ENCODE measurements at regions of chr11 and their contacts with region 1.

Region 1: DNA sequence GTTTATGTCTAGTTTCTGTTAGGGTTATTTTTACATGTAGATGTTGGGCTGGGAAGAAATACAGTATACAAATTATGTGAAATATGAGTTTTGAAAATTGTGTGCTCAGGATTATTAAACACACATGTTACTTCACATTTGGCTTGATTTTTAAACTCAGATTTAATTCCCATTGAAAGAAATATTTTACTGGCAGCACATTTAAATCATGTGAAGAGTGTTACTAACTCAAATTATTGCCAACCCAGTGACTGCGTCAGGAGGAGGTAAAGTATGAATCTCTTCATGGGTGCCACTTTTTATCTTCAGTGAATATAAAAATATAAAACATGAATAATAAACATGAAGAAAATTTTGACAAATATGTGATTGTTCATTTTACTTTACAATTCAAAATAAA is 457.5 kb upstream of the CCDC179 start:
- DNase-seq: no peak
- ATAC-seq: no peak
- H3K4me3 ChIP-seq: no peak overlapping the region
- H3K27ac ChIP-seq: no peak overlapping the region; the same call in 1 of the 2 replicates
- H3K4me1 ChIP-seq: peaks cover 33% of the 10 kb centered on the region
- H3K27me3 ChIP-seq: no peaks in the 10 kb centered on the region
- CTCF ChIP-seq: no peak

Region 2: GRCh38 chr11:22890227-22890626 is 427.6 kb before region 1 on chr11:
- CTCF ChIA-PET with region 1: no interaction called
- POLR2A ChIA-PET with region 1: no interaction called
- intact Hi-C with region 1: no loop called
- DNase-seq: no peak
- ATAC-seq: no peak
- H3K4me3 ChIP-seq: no peak overlapping the region
- H3K27ac ChIP-seq: no peak overlapping the region
- H3K4me1 ChIP-seq: no peaks in the 10 kb centered on the region
- H3K27me3 ChIP-seq: no peaks in the 10 kb centered on the region
- CTCF ChIP-seq: no peak

Region 3: GRCh38 chr11:22984045-22984444 is 333.8 kb before region 1 on chr11:
- CTCF ChIA-PET with region 1: no interaction called
- POLR2A ChIA-PET with region 1: no interaction called
- intact Hi-C with region 1: no loop called
- DNase-seq: no peak
- ATAC-seq: no peak
- H3K4me3 ChIP-seq: no peak overlapping the region
- H3K27ac ChIP-seq: no peak overlapping the region
- H3K4me1 ChIP-seq: no peaks in the 10 kb centered on the region
- H3K27me3 ChIP-seq: no peaks in the 10 kb centered on the region
- CTCF ChIP-seq: no peak

Region 4: DNA sequence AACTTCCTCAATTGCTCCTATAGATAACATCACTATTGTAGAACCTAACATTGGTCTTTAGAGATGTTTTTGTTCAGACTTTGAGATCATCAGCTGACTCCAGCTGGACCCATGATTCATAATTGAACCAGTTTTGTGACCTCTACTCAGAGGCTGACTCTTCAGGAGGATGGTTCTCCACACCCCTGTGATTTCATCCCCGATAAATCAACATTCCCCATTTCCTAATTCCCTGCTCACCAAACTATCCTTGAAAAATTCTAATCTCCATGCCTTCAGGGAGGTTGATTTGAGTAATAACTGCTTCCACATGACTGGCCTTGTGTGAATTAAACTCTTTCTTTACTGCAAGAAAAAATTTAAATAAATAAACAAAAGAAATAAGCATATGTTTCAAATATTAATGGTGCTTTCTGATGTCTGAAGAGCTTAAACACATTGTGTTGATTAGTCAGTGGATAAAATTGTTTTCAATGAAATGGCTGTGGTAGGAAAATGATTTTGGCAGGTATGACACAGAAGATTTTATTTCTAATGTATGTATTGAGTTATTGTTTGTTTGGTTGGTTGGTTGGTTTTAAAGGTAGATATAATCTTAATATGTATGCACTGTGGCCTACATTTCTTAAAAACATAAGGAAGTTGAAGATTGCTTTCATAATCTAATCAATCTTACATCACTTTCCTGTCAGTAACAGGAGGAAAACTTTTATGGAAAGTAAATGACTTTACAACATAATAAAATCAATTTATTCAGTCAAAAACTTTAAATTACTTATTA is 29.6 kb before region 1 on chr11:
- CTCF ChIA-PET with region 1: no interaction called
- POLR2A ChIA-PET with region 1: no interaction called
- intact Hi-C with region 1: loop called (anchors 1 kb)
- DNase-seq: peak; percentile 81
- ATAC-seq: peak; percentile 83
- H3K4me3 ChIP-seq: no peak overlapping the region
- H3K27ac ChIP-seq: peak overlapping the region; percentile 88
- H3K4me1 ChIP-seq: peaks cover 16% of the 10 kb centered on the region
- H3K27me3 ChIP-seq: no peaks in the 10 kb centered on the region
- CTCF ChIP-seq: no peak

Region 5: GRCh38 chr11:23509023-23509422 is 191.2 kb after region 1 on chr11:
- CTCF ChIA-PET with region 1: no interaction called
- POLR2A ChIA-PET with region 1: no interaction called
- intact Hi-C with region 1: loop called (anchors 1 kb)
- DNase-seq: peak; percentile 77
- ATAC-seq: peak; percentile 97
- H3K4me3 ChIP-seq: no peak overlapping the region
- H3K27ac ChIP-seq: peak overlapping the region; percentile 26; the same call in 1 of the 2 replicates
- H3K4me1 ChIP-seq: peaks cover 10% of the 10 kb centered on the region
- H3K27me3 ChIP-seq: no peaks in the 10 kb centered on the region
- CTCF ChIP-seq: no peak

Region 6: DNA sequence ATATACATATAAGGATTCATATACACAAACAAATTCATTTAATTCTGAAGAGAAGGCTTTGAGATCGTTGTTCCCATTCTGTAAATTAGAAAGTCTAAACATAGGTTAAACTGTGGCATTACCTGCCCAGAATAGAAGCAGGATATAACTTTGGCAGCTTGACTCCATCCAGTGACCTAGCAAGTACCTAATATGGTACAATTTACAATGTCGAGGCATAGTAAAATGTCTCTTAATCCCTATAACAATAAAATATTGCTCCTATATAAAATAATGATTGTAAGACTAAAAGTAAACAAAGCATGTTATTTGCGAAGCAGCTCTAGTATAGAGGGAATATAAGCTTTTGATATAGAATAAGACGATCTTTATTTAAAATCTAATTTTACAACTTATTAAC is 1935.0 kb after region 1 on chr11:
- CTCF ChIA-PET with region 1: no interaction called
- POLR2A ChIA-PET with region 1: no interaction called
- intact Hi-C with region 1: no loop called
- DNase-seq: no peak
- ATAC-seq: peak; percentile 50
- H3K4me3 ChIP-seq: no peak overlapping the region
- H3K27ac ChIP-seq: no peak overlapping the region
- H3K4me1 ChIP-seq: peaks cover 1% of the 10 kb centered on the region; the same call in 1 of the 2 replicates
- H3K27me3 ChIP-seq: no peaks in the 10 kb centered on the region
- CTCF ChIP-seq: no peak

Measured in PC-3 (cell line).